PC-9 (cell line): ENCODE measurements at regions of chr3 and their contacts with region 1.

Region 1: GRCh38 chr3:48507351-48508061 is 3.5 kb upstream of the SHISA5 start:
- DNase-seq: peak; percentile 95 to 99
- H3K4me3 ChIP-seq: no peak overlapping the region; the same call in 1 of the 2 replicates
- H3K27ac ChIP-seq: peak overlapping the region; percentile 92
- H3K4me1 ChIP-seq: peaks cover 54% of the 10 kb centered on the region
- H3K27me3 ChIP-seq: no peaks in the 10 kb centered on the region
- CTCF ChIP-seq: no peak; the same call in 1 of the 2 replicates

Region 2: GRCh38 chr3:48465531-48466378 is 41.8 kb before region 1 on chr3:
- CTCF ChIA-PET with region 1: interaction called, 4 read pairs
- POLR2A ChIA-PET with region 1: no interaction called
- intact Hi-C with region 1: loop called (anchors 1 kb)
- DNase-seq: peak; percentile 98 to 100
- H3K4me3 ChIP-seq: peak overlapping the region; percentile 63
- H3K27ac ChIP-seq: peak overlapping the region; percentile 99
- H3K4me1 ChIP-seq: peaks cover 21% of the 10 kb centered on the region
- H3K27me3 ChIP-seq: no peaks in the 10 kb centered on the region
- CTCF ChIP-seq: peak; percentile 70

Region 3: DNA sequence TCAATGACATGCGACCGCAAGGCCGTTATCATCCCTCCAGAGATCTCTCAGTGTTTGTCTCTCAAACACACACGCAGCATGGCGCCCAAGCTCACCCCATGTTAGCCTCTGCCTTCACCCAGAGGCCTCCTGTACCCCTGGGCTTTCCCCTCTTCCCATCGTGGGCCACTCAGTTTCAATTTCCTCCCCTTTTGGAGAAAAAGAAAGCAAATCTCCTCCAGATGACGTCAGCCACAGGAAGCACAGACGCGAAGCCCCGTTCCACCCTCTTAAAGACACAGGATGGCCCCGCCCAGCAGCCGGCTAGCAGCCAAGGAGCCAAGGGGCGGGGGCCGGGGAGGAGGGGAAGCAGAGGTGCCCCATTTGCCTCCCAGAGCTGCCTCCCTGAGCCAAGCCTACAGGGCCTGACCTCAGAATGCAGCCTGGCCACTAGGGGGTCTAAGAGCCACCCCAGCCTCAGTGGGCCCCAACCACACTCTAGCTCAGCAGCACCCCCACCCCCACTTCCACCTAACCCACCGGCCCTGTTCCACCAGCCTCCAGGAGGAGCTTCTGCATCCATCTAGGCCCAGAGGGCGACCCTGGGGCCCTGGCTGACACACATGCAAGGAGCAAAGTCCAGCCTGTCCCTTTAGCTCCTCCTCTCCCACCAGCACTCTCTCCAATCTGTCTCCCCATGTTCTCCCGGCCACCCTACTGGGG is 34.4 kb before region 1 on chr3:
- CTCF ChIA-PET with region 1: no interaction called
- POLR2A ChIA-PET with region 1: interaction called, 25 read pairs
- intact Hi-C with region 1: loop called (anchors 1 kb)
- DNase-seq: peak; percentile 81 to 91
- H3K4me3 ChIP-seq: peak overlapping the region; percentile 62
- H3K27ac ChIP-seq: peak overlapping the region; percentile 68
- H3K4me1 ChIP-seq: peaks cover 19% of the 10 kb centered on the region
- H3K27me3 ChIP-seq: no peaks in the 10 kb centered on the region
- CTCF ChIP-seq: peak; percentile 40; the same call in 1 of the 2 replicates

Region 4: GRCh38 chr3:48478596-48479555 is 28.6 kb before region 1 on chr3:
- CTCF ChIA-PET with region 1: interaction called, 10 read pairs
- POLR2A ChIA-PET with region 1: interaction called, 25 read pairs
- intact Hi-C with region 1: no loop called
- DNase-seq: no peak
- H3K4me3 ChIP-seq: no peak overlapping the region
- H3K27ac ChIP-seq: no peak overlapping the region
- H3K4me1 ChIP-seq: no peaks in the 10 kb centered on the region
- H3K27me3 ChIP-seq: no peaks in the 10 kb centered on the region
- CTCF ChIP-seq: no peak

Region 5: GRCh38 chr3:48543271-48543866 is 35.9 kb after region 1 on chr3:
- CTCF ChIA-PET with region 1: no interaction called
- POLR2A ChIA-PET with region 1: no interaction called
- intact Hi-C with region 1: loop called (anchors 2 kb)
- DNase-seq: peak; percentile 79 to 83
- H3K4me3 ChIP-seq: no peak overlapping the region
- H3K27ac ChIP-seq: 0 out of 2 replicates have a peak overlapping the region, but pooled peaks have one; percentile 38
- H3K4me1 ChIP-seq: peaks cover 18% of the 10 kb centered on the region
- H3K27me3 ChIP-seq: no peaks in the 10 kb centered on the region
- CTCF ChIP-seq: no peak

Region 6: GRCh38 chr3:48548729-48549705 is 41.5 kb after region 1 on chr3:
- CTCF ChIA-PET with region 1: interaction called, 6 read pairs
- POLR2A ChIA-PET with region 1: interaction called, 34 read pairs
- intact Hi-C with region 1: no loop called
- DNase-seq: peak; percentile 56 to 84
- H3K4me3 ChIP-seq: no peak overlapping the region
- H3K27ac ChIP-seq: no peak overlapping the region
- H3K4me1 ChIP-seq: 0 out of 2 replicates have a peak, but pooled peaks cover 3% of the 10 kb centered on the region
- H3K27me3 ChIP-seq: no peaks in the 10 kb centered on the region
- CTCF ChIP-seq: peak; percentile 90

Region 7: DNA sequence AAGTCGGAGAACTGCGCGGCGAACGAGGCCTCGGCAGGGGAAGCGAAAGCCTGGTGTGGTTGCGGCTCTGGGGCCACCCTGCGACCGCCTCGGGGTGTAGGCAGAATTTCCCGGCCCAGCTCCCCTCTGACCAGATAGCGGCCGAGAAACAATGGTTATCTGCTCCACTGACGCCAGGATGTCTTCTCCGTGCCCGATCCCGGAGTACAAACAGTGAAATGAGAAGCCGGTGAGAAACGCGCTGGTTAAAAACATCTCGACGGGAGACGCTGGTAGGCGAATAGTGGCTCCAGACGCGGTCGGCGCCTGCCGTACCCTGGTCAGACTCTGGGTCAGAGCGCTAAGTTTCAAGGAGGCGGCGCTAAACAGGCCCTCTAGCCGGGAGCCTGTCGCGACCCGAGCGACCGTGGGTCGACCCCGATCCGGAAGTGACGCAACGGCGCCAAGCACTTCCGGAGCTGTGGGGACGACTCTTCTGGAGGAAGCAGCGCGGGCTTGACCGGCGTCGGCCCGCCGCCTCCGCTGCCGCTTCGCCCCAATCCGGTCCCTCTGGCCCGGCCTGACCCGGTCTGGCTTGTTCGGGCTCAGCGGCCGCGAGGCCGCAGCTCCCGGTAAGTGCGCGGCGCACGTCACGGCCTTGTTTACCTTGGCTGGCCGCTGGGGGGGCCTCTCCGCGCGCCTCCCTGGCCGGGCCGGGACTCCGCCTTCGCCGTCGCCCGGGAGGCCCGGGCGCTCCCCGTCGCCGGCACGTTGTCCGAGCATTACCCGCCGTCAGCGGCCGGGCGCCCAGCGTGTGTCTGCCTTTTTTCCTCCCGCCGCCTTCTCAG is 411.1 kb after region 1 on chr3 and contains the start of gene ARIH2:
- CTCF ChIA-PET with region 1: no interaction called
- POLR2A ChIA-PET with region 1: no interaction called
- intact Hi-C with region 1: loop called (anchors 10 kb)
- DNase-seq: peak; percentile 84 to 87
- H3K4me3 ChIP-seq: peak within 1 kb of the TSS; percentile 62
- H3K27ac ChIP-seq: peak within 1 kb of the TSS; percentile 96
- H3K4me1 ChIP-seq: peaks cover 13% of the 10 kb centered on the region
- H3K27me3 ChIP-seq: no peaks in the 10 kb centered on the region
- CTCF ChIP-seq: no peak
- total RNA-seq, gene ARIH2: 86.1 and 96.8 TPM in 2 replicates